ENCODE measurements at regions of chr18 and their contacts with region 1.

Region 1: DNA sequence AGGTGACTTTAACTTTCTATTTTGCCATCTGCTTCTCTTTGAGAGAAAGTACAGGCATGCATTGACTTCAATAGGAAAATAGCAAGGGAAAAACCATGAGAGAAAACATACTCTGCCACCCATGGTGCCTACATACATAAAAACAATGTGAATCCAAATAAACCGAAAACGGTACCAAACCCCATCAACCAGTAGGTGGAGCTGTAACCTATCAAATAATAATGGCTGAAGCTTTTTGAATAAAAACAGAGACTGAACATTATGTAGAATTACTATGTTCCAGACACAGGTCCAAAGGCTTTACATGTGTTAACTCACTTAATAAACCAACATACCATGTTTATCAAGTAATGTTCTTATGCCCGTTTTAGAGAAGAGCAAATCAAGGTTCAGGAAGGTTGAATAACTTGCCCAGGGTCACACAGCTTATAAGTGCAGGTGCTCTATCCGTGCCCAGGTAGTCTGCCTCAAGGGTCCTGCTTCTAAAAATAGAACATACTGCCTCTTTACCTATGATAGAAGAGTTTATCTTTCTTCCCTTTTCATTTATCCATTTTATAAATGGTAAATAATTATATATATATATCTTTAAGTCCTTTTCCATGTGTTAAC is 293.9 kb upstream of the SYT4 start:
- DNase-seq: peak; percentile 11
- H3K4me3 ChIP-seq: no peak overlapping the region
- H3K27ac ChIP-seq: no peak overlapping the region
- H3K27me3 ChIP-seq: no peaks in the 10 kb centered on the region
- CTCF ChIP-seq: peak; percentile 82

Region 2: GRCh38 chr18:43547456-43547855 is 23.7 kb before region 1 on chr18:
- CTCF ChIA-PET with region 1: no interaction called
- POLR2A ChIA-PET with region 1: no interaction called
- DNase-seq: no peak
- H3K4me3 ChIP-seq: no peak overlapping the region
- H3K27ac ChIP-seq: no peak overlapping the region
- H3K27me3 ChIP-seq: no peaks in the 10 kb centered on the region
- CTCF ChIP-seq: no peak

Region 3: GRCh38 chr18:43581936-43582519 is 10.8 kb after region 1 on chr18:
- CTCF ChIA-PET with region 1: interaction called, 168 read pairs
- POLR2A ChIA-PET with region 1: no interaction called
- DNase-seq: no peak
- H3K4me3 ChIP-seq: no peak overlapping the region
- H3K27ac ChIP-seq: no peak overlapping the region
- H3K27me3 ChIP-seq: no peaks in the 10 kb centered on the region
- CTCF ChIP-seq: no peak

Region 4: DNA sequence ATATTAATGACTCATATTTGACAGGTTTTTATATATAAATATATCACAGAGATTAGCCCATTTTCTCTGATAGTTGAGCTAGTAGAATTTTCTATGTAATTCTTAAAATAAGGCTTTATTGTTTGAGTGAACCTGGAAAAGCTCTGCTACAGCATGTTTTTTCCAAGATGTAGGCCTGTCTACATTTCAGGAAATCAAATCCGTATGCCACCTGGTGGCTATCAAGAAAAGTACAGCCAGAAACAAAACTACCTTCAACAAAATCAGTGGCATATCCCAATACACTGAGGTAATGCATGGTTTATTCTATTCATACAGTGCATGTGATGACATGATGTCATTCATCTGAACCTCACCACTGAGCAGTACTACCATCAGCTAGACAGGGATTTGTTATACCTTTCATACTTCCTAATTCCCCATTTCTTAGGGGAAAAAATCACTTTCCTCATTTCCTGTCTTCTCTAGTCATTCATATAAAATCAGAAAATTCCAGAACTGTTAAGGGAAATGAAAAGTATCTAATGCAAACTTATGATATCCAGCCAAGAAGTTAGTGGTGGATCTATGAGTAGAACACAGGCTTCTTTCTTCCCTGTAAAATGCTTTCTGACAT is 16.5 kb after region 1 on chr18:
- CTCF ChIA-PET with region 1: interaction called, 168 read pairs
- POLR2A ChIA-PET with region 1: no interaction called
- DNase-seq: no peak
- H3K4me3 ChIP-seq: no peak overlapping the region
- H3K27ac ChIP-seq: no peak overlapping the region
- H3K27me3 ChIP-seq: no peaks in the 10 kb centered on the region
- CTCF ChIP-seq: peak; percentile 75

Region 5: GRCh38 chr18:43596105-43596712 is 25.0 kb after region 1 on chr18:
- CTCF ChIA-PET with region 1: interaction called, 168 read pairs
- POLR2A ChIA-PET with region 1: no interaction called
- DNase-seq: no peak
- H3K4me3 ChIP-seq: no peak overlapping the region
- H3K27ac ChIP-seq: no peak overlapping the region
- H3K27me3 ChIP-seq: no peaks in the 10 kb centered on the region
- CTCF ChIP-seq: peak; percentile 63

Region 6: GRCh38 chr18:43876286-43876685 is 305.1 kb after region 1 on chr18:
- CTCF ChIA-PET with region 1: no interaction called
- POLR2A ChIA-PET with region 1: no interaction called
- DNase-seq: no peak
- H3K4me3 ChIP-seq: no peak overlapping the region
- H3K27ac ChIP-seq: no peak overlapping the region
- H3K27me3 ChIP-seq: no peaks in the 10 kb centered on the region
- CTCF ChIP-seq: no peak

Region 7: GRCh38 chr18:44423814-44424644 is 852.8 kb after region 1 on chr18:
- CTCF ChIA-PET with region 1: no interaction called
- POLR2A ChIA-PET with region 1: no interaction called
- DNase-seq: no peak
- H3K4me3 ChIP-seq: no peak overlapping the region
- H3K27ac ChIP-seq: no peak overlapping the region
- H3K27me3 ChIP-seq: no peaks in the 10 kb centered on the region
- CTCF ChIP-seq: no peak

Measured in AG04450 (cell line).